T-cell (primary cell): ENCODE measurements at regions of chr12 and their contacts with region 1.

Region 1: DNA sequence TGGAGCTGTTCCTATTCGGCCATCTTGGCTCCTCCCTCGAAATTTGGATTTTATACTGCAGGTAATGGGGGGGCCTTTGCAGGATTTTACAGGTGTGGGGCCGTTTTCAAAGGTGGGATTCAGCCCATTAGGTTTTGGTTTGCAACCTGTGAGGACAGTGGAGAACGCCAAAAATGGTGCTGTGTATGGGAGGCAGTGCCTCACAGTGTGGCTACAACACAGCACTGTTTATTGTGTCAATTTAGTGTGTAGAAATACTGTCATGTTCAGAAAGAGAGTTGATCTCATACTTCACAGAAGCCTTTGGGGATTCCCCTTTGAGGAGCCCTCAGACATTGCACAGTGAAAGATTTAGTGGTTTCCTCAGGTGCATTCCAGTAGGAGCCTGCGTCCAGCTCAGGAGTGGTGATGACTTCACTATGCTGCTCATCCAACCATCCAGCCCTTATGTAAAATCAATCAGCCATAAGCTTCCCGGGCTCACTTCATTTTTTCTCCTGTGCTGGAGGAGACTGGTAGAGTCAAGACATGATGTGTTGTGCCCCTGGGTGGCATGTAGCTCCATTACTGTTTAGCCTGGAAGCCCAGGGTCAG is 92.7 kb upstream of the PRMT8 start:
- DNase-seq: no peak
- ATAC-seq: no peak
- H3K4me3 ChIP-seq: no peak overlapping the region
- H3K4me3 Mint-ChIP-seq: no peak overlapping the region
- H3K27ac ChIP-seq: no peak overlapping the region
- H3K27ac Mint-ChIP-seq: no peak overlapping the region
- H3K4me1 ChIP-seq: no peaks in the 10 kb centered on the region
- H3K4me1 Mint-ChIP-seq: no peaks in the 10 kb centered on the region
- H3K27me3 ChIP-seq: peaks cover 0 to 15% of the 10 kb centered on the region in 2 experiments
- H3K27me3 Mint-ChIP-seq: peaks cover 23 to 37% of the 10 kb centered on the region in 2 donors

Region 2: DNA sequence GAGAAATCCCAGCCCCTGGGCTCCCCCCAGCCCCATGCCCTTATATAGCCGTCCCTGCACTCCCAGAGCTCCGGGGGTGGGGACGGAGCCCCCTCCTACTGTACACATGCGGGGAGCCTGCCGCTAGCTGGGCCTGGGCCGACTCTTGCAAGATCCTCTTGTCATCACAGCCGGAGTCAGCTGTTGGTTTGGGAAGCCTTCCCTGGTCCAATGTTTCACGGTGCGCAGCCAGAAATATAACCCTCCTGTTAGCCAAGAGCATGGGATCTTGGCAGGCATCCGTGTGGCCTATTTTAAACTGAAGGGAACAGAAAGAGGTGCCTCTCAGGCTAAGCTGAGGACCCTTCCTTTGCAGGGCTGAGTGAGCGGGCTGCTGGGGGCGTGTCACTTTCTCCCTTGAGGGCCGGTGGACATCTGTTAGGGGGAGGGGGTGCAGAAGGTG is 145.8 kb before region 1 on chr12:
- CTCF ChIA-PET with region 1: no interaction called
- POLR2A ChIA-PET with region 1: no interaction called
- DNase-seq: no peak
- ATAC-seq: no peak
- H3K4me3 ChIP-seq: no peak overlapping the region
- H3K4me3 Mint-ChIP-seq: no peak overlapping the region
- H3K27ac ChIP-seq: no peak overlapping the region
- H3K27ac Mint-ChIP-seq: no peak overlapping the region
- H3K4me1 ChIP-seq: peaks cover 0 to 4% of the 10 kb centered on the region in 2 experiments
- H3K4me1 Mint-ChIP-seq: peaks cover 5 to 12% (median 6%) of the 10 kb centered on the region in 3 donors
- H3K27me3 ChIP-seq: peaks cover 0 to 23% of the 10 kb centered on the region in 2 experiments
- H3K27me3 Mint-ChIP-seq: peaks cover 6 to 14% of the 10 kb centered on the region in 2 donors

Region 3: DNA sequence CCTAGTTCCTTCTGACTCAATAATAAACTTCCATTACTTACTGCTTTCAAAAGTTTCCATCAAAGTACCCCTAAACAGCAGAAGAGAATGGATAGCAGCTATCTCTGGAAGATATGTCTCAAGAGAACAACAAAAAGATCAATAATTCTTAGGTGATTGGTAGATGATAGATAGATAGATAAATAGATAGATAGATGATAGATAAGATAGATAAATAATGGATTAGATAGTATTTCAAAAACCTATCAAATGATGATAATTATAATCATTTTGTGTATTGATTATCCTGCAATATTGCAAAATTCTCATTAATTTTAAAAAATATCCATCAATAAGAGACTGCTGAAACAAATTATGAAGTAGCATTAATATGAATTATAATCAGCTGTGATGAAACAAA is 777.9 kb after region 1 on chr12:
- CTCF ChIA-PET with region 1: interaction called in 1 of 2 experiments, 10 read pairs
- POLR2A ChIA-PET with region 1: no interaction called
- DNase-seq: no peak
- ATAC-seq: no peak
- H3K4me3 ChIP-seq: no peak overlapping the region
- H3K4me3 Mint-ChIP-seq: no peak overlapping the region
- H3K27ac ChIP-seq: no peak overlapping the region
- H3K27ac Mint-ChIP-seq: no peak overlapping the region
- H3K4me1 ChIP-seq: no peaks in the 10 kb centered on the region
- H3K4me1 Mint-ChIP-seq: peaks cover 0 to 3% (median 0%) of the 10 kb centered on the region in 3 donors
- H3K27me3 ChIP-seq: no peaks in the 10 kb centered on the region
- H3K27me3 Mint-ChIP-seq: no peaks in the 10 kb centered on the region